Activated CD4-positive, alpha-beta T cell treated with anti-CD3 and anti-CD28 coated beads, Interleukin-2, amount 10 ng/mL, durations not matched to agents 24 days and 14 days (primary cell): ENCODE measurements at regions of chr1 and their contacts with region 1.

Region 1: GRCh38 chr1:89590415-89591080 is 42.4 kb upstream of the LRRC8C start:
- DNase-seq: no peak
- H3K4me3 Mint-ChIP-seq: peak overlapping the region; percentile 33
- H3K27ac Mint-ChIP-seq: peak overlapping the region; percentile 80
- H3K4me1 Mint-ChIP-seq: peaks cover 67% of the 10 kb centered on the region
- H3K27me3 Mint-ChIP-seq: no peaks in the 10 kb centered on the region

Region 2: DNA sequence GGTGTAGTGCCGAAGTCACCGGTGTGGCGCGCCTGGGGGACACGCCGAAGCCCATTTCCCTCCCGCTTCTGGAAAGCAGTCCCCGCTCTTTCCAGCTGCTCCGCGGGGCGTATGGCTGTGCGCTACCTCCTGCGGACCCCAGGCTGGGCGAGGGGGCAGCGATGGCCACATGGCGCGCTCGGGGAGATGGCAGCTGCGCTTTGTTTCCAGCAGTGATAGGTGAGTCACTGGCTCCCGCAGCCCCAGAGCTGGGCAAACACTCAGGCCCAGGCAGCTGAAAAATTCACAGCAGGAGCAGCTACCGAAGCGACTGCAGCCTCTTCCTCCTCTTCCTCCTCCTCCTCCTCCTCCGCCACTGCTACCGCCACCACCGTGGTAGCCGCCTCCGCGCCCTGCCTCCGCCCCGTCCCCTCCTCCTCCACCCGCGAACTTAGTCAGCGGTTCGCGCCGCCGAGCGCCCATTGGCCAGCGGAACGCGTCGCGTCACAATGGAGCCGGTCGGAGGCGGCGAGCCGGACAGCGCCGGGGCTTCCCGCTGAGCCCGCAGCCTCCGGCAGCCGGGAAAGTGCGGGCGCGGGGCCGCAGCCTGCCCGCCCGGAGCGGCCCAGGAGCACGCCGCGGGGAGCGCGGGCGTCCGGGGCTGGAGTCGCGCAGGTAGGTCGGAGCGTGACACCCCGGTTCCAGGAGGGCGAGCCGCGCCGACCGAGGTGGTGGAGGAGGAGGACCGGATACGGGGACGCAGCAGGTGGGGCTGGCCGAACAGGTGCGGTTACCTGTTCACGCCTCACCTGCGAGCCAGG is 66.0 kb before region 1 on chr1 and contains the start of gene LRRC8B:
- intact Hi-C with region 1: no loop called
- DNase-seq: peak; percentile 98
- H3K4me3 Mint-ChIP-seq: no peak within 1 kb of the TSS
- H3K27ac Mint-ChIP-seq: peak within 1 kb of the TSS; percentile 95
- H3K4me1 Mint-ChIP-seq: peaks cover 34% of the 10 kb centered on the region
- H3K27me3 Mint-ChIP-seq: no peaks in the 10 kb centered on the region
- total RNA-seq, gene LRRC8B: 74.5 and 76.8 TPM in 2 replicates

Region 3: GRCh38 chr1:89563957-89564604 is 26.5 kb before region 1 on chr1:
- intact Hi-C with region 1: loop called (anchors 2 kb)
- DNase-seq: no peak
- H3K4me3 Mint-ChIP-seq: no peak overlapping the region
- H3K27ac Mint-ChIP-seq: no peak overlapping the region
- H3K4me1 Mint-ChIP-seq: peaks cover 22% of the 10 kb centered on the region
- H3K27me3 Mint-ChIP-seq: no peaks in the 10 kb centered on the region